ENCODE measurements at regions of chr7 and their contacts with region 1.

Region 1: DNA sequence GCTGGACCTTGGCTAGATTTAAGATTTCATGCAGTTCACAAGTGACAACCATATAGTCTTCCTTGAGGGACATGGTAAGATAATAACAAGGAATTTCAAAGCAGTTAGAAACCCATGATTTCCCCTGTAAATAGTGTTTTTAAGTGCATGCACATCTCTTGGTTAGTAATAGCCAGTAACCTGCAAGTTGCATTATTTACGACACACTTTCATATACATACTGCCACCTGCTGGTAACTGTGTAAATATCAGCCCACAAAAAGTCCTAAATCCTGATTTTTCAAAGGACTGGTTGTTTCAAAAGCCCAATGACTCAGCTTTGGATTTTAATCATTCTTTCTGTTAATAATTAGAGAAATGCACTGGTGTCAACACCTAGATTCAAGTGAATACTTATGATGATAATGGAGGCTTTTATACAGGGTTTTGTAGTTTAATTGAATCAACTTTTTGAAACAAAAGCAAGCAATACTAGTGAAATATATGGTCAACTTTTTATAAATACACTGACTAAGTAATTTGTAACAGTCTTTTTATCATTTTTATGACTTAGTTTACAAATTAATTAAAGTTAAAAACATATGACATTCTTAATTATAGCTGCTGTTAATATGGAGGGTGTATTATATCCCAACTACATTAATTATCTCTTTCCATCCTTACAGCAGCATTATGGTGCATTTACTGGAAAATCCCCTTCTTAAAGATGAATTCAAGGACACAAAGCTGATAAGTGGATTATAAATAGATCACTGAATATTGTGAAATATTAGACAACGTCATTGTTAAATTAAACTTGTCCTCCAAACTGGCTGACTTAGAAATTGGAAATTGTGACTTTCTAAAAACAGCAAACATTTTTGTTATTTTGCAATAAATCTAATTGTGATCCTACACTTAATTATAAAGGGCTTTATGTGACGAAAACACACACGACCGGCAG is 367.7 kb upstream of the SEMA3D start:
- DNase-seq: no peak

Region 2: GRCh38 chr7:83936056-83936708 is 1618.3 kb before region 1 on chr7:
- intact Hi-C with region 1: loop called (anchors 10 kb)
- DNase-seq: peak; percentile 75

Region 3: GRCh38 chr7:85041605-85042216 is 512.8 kb before region 1 on chr7:
- intact Hi-C with region 1: loop called (anchors 5 kb)
- DNase-seq: no peak

Region 4: GRCh38 chr7:85454904-85455303 is 99.6 kb before region 1 on chr7:
- intact Hi-C with region 1: no loop called
- DNase-seq: no peak

Region 5: DNA sequence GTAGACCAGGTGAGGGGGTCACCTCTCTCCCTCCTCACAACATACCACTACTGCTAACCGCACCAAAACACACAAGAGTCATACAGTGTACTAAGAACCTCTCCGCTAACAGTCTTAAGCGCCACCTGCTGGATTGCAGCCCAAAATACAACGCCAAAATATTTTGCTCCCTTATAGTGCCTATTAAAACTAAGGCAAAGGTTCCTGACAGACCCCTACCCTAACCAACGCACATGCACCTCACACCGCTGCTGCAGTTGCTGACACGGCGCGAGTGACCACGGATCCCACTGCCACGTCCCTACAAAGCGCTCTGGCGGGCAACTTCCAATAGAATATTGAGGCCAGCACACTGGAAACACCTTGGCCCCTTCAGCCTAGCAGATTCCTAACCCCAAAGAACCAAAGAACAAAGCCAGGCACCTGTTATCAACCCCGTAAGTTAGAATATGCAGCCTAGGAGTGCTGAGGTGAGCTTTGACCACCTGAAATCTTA is 196.0 kb after region 1 on chr7:
- intact Hi-C with region 1: no loop called
- DNase-seq: no peak

Measured in cardiac septum (tissue), 1 donor.